ENCODE measurements at regions of chr18 and their contacts with region 1.

Region 1: DNA sequence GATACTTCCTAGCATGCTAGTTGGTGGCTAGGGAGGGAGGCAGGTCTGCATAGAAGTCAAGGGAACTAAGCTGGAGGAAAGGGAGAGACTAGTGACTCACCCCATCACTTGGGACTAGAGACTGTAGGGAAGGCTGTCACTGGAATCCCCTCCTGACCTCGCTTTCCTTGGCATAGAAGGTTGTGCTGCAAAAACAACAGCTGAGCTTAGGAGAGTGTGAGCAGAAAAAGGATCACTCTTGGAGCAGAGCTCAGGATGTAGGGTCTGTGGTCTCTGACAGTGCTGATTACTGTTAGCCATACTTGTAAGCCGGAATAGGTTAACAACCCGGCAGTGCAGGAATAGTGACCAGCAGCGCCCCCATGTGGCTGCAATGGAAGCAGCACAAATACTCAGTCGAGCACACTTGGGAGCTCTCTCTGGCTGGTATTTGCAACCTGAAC is 66.9 kb upstream of the SMAD2 start:
- DNase-seq: no peak
- H3K4me3 Mint-ChIP-seq: no peak overlapping the region
- H3K27ac Mint-ChIP-seq: no peak overlapping the region
- H3K4me1 Mint-ChIP-seq: no peaks in the 10 kb centered on the region
- H3K27me3 Mint-ChIP-seq: peaks cover 7% of the 10 kb centered on the region

Region 2: DNA sequence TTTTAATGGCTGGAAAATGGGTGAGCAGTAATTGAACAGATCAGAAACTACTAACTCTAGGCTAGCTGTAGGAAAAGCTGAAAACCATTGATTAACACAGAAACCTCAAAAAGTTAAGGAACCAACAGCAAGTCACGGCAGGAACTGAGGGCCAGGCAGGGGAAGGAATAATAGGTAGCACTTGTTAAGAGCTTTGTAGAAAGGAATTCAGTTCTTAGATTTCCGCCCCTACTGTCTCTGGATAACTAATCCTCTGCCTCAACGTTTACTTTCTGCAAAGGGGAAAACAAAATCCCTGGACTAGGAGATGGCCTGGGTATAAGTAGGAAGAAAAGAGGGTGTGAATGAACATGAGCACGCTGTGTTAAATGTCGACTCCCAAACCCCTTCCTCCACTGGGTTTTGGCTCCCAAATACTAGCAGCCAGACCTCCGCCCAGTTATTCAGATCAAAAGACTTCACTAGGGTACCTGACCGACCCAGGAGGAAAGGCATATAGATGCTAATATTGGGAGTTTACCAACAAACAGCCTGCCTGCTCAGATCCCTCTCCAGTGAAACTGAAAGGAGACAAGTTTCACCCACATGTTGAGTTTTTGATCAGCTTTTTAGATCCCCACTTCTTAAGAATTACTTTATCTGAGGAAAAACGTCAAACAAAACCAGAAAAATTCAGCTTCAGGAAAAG is 79.3 kb before region 1 on chr18:
- intact Hi-C with region 1: no loop called
- DNase-seq: no peak
- H3K4me3 Mint-ChIP-seq: peak overlapping the region; percentile 66
- H3K27ac Mint-ChIP-seq: peak overlapping the region; percentile 96
- H3K4me1 Mint-ChIP-seq: peaks cover 86% of the 10 kb centered on the region
- H3K27me3 Mint-ChIP-seq: no peaks in the 10 kb centered on the region

Region 3: DNA sequence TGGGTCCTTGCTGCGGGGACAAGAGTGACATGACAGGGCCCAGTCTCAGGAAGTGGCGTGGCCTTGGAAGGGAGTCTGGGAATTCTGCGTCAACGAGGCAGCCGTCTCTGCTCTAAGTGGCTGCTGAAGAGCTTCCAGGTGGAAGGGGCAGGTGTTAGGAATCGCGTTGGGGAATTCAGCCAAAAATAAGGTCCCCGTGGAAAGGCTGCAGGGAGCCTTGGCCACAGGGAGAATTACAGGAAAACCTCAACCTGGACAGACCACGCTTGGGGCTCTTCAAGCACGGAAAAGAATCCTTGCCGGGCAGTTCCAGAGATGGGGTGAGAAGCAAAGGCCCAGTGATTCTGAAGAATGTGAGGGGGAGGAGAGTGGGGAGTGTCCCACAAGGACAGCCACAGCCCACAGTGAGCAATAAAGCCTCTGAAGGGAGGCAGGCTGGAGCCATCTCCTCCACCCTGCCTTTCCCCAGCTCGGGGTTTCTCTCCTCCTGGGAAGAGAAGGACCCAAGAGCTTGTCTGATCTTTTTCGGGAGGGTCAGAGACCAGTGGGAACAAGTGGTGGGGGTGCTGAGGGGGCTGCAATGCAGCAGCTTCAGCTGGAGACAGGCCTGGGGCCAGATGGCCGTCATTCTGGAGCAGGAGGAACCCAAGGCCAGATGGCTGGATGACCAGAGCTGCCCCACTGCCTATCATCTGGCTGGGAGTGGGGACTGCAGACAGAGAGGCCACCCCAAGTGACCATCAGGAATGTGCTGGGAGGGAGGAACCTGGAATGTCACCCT is 39.5 kb after region 1 on chr18:
- intact Hi-C with region 1: loop called (anchors 1 kb)
- DNase-seq: no peak
- H3K4me3 Mint-ChIP-seq: no peak overlapping the region
- H3K27ac Mint-ChIP-seq: no peak overlapping the region
- H3K4me1 Mint-ChIP-seq: no peaks in the 10 kb centered on the region
- H3K27me3 Mint-ChIP-seq: no peaks in the 10 kb centered on the region

Region 4: DNA sequence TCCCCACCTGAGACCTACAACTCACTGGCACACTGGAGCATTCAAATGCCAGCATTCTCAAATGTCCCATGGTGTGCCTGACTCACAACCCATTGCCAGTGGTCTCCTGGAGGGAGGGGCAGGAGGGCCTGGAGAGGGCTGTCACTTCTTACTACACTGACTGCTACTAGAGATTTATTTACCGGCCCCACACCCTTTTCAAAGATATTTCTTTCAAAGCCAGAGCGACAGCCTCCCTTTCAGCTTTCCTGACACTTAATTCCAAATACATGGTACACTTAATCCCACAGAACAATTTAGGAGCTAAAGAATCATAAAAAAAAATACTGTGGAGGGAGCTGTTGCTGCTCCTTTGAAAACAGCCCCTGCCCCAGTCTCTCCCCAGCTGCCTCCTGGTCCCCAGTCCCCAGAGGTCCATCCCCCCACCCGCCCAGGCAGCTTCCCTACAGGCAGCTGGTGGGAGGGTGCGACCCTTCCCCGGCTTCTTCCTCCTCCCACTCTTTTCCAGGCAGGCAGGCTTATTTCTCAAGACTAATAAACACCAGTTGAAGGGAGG is 62.2 kb after region 1 on chr18:
- intact Hi-C with region 1: no loop called
- DNase-seq: no peak
- H3K4me3 Mint-ChIP-seq: no peak overlapping the region
- H3K27ac Mint-ChIP-seq: no peak overlapping the region
- H3K4me1 Mint-ChIP-seq: no peaks in the 10 kb centered on the region
- H3K27me3 Mint-ChIP-seq: peaks cover 30% of the 10 kb centered on the region

Measured in activated T-helper 1 cell treated with anti-CD3 and anti-CD28 coated beads, Interleukin-12 subunit alpha, Interleukin-12 subunit beta, Interleukin-2, Interleukin-4 antibody, amounts not matched to agents 30 ng/mL and 10 ng/mL and 1 ng/mL, durations not matched to agents 14 hours and 24 hours and 36 hours (primary cell).